ENCODE measurements at regions of chr1 and their contacts with region 1.

Region 1: DNA sequence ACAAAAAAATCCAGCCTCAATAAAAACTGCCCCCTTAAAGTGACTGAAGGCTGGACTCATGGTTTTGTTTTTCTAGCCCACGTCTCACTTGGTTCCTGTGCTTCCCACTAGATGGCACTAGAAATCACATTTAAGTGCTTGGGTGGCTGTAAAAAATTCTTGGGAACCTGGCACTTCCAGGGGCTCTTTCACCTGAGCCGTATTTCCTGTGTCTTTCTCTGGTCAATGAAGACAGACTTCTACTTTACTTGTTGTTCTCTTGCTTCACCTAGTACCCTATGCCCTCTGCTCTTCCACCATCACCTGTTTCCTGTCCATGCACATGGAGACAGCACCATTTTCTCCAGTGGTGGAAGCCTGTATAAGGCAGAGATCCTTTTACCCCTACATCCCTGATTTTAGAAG is 20.0 kb downstream of the METTL13 start:
- DNase-seq: peak in 2 of 5 donors; percentile 20 to 23
- H3K4me3 ChIP-seq: no peak overlapping the region
- H3K4me3 Mint-ChIP-seq: no peak overlapping the region
- H3K27ac ChIP-seq: no peak overlapping the region
- H3K27ac Mint-ChIP-seq: peak overlapping the region in 1 of 7 donors; percentile 7
- H3K4me1 ChIP-seq: no peaks in the 10 kb centered on the region
- H3K4me1 Mint-ChIP-seq: peaks cover 3 to 8% (median 6%) of the 10 kb centered on the region in 4 donors
- H3K27me3 ChIP-seq: no peaks in the 10 kb centered on the region
- H3K27me3 Mint-ChIP-seq: no peaks in the 10 kb centered on the region

Region 2: GRCh38 chr1:171644805-171645483 is 156.5 kb before region 1 on chr1:
- CTCF ChIA-PET with region 1: interaction called, 10 read pairs
- POLR2A ChIA-PET with region 1: no interaction called
- intact Hi-C with region 1: loop called (anchors 5 kb)
- DNase-seq: peak; percentile 54 to 65 (median 56)
- H3K4me3 ChIP-seq: no peak overlapping the region
- H3K4me3 Mint-ChIP-seq: peak overlapping the region in 2 of 8 donors; percentile 15 to 48
- H3K27ac ChIP-seq: no peak overlapping the region
- H3K27ac Mint-ChIP-seq: peak overlapping the region in 2 of 7 donors; percentile 14 to 19
- H3K4me1 ChIP-seq: no peaks in the 10 kb centered on the region
- H3K4me1 Mint-ChIP-seq: peaks cover 6 to 12% (median 7%) of the 10 kb centered on the region in 4 donors
- H3K27me3 ChIP-seq: no peaks in the 10 kb centered on the region
- H3K27me3 Mint-ChIP-seq: peaks cover 3 to 9% of the 10 kb centered on the region in 2 donors

Region 3: GRCh38 chr1:171788696-171789095 is 12.8 kb before region 1 on chr1:
- CTCF ChIA-PET with region 1: interaction called, 26 read pairs
- POLR2A ChIA-PET with region 1: no interaction called
- intact Hi-C with region 1: no loop called
- DNase-seq: no peak
- H3K4me3 ChIP-seq: no peak overlapping the region
- H3K4me3 Mint-ChIP-seq: no peak overlapping the region
- H3K27ac ChIP-seq: no peak overlapping the region
- H3K27ac Mint-ChIP-seq: no peak overlapping the region
- H3K4me1 ChIP-seq: peaks cover 22% of the 10 kb centered on the region
- H3K4me1 Mint-ChIP-seq: peaks cover 19 to 42% (median 30%) of the 10 kb centered on the region in 4 donors
- H3K27me3 ChIP-seq: no peaks in the 10 kb centered on the region
- H3K27me3 Mint-ChIP-seq: no peaks in the 10 kb centered on the region

Region 4: DNA sequence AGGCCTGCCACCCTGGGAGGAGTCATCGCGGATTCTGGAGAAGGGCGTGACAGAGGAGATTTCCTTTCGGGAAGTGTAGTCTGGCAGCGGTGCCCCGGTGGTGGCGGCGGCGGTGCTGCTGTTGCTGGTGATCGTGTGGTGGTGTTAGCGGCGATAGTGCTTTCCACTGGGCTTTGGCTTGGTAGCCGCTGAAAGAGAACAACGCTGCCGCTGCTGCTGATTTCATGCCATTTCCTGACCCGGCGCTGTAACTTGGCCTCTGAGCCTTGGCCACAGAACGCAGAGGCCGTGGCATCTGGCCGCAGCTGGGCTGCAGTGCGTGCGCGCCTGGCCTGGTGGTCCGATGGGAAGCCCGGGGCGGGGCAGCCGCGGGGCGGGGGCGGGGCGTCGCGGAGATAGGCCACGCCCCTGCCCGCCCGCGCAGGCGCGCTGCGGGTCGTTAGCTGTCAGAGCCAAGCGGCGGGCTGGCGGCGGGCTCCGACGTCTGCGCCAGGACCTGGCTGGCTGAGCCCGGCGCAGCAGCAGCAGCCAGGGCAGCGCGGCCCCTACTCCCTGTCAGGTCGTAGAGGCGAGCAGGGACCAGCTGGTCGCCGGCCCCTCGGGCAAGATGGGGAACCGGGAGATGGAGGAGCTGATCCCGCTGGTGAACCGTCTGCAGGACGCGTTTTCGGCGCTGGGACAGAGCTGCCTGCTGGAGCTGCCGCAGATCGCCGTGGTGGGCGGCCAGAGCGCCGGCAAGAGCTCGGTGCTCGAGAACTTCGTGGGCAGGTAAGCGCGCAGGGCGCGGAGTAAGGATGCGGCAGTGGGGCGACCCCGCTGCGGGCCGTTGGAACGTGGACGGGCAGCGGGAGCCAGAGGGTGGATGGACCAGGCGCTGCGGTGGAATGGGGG is 39.8 kb after region 1 on chr1 and contains the start of gene DNM3:
- CTCF ChIA-PET with region 1: interaction called, 23 read pairs
- POLR2A ChIA-PET with region 1: interaction called, 3 read pairs
- intact Hi-C with region 1: no loop called
- DNase-seq: peak; percentile 70 to 89 (median 85)
- H3K4me3 ChIP-seq: peak within 1 kb of the TSS; percentile 43 to 66
- H3K4me3 Mint-ChIP-seq: peak within 1 kb of the TSS; percentile 88 to 93 (median 89)
- H3K27ac ChIP-seq: peak within 1 kb of the TSS; percentile 41
- H3K27ac Mint-ChIP-seq: peak within 1 kb of the TSS; percentile 62 to 94 (median 81)
- H3K4me1 ChIP-seq: peaks cover 16% of the 10 kb centered on the region
- H3K4me1 Mint-ChIP-seq: peaks cover 12 to 20% (median 15%) of the 10 kb centered on the region in 4 donors
- H3K27me3 ChIP-seq: peaks cover 13% of the 10 kb centered on the region
- H3K27me3 Mint-ChIP-seq: peaks cover 7 to 10% of the 10 kb centered on the region in 2 donors
- total RNA-seq, gene DNM3: 2.0 to 2.7 TPM

Region 5: DNA sequence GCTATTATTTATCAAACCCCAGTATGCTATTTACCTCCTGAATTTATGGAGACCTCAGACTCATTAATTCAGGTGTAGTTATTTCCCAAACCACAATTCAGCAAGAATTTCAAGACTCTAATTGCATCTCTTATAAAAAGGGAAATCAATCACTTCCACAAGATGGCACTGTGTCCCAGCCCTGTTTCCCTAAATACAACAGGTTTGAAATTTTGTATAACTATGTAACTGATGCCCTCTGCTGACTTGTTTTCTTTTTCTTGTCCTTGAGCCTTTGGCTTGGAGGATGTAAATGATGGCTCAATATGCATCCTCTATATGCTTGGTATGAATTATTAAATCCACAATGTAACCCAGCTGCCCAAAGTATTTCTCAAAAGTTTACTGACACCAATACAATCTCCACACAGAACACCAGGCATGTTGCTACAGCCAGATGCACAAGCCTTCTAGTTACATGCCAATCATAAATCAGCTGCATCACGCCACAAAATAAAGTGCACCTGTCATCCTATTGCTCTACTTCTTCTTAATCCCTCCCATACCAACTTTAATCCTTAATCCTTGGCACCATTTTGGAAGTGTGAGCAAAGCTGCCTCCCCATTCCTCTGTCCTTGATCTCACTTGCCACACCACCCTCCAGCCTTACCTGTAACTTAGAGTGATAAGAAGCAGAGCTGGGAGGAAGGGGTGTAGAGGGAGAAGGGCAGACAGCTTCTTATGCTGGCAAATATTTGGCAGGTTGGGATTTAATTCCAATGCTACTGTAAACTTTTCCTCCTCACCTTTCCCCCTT is 628.0 kb after region 1 on chr1:
- CTCF ChIA-PET with region 1: interaction called, 3 read pairs
- POLR2A ChIA-PET with region 1: no interaction called
- intact Hi-C with region 1: loop called (anchors 1 kb)
- DNase-seq: peak; percentile 49 to 63 (median 56)
- H3K4me3 ChIP-seq: no peak overlapping the region
- H3K4me3 Mint-ChIP-seq: peak overlapping the region in 2 of 8 donors; percentile 26 to 39
- H3K27ac ChIP-seq: no peak overlapping the region
- H3K27ac Mint-ChIP-seq: peak overlapping the region in 6 of 7 donors; percentile 5 to 72 (median 56)
- H3K4me1 ChIP-seq: peaks cover 59% of the 10 kb centered on the region
- H3K4me1 Mint-ChIP-seq: peaks cover 31 to 49% (median 41%) of the 10 kb centered on the region in 4 donors
- H3K27me3 ChIP-seq: no peaks in the 10 kb centered on the region
- H3K27me3 Mint-ChIP-seq: no peaks in the 10 kb centered on the region